Gastrocnemius medialis (tissue), 4 donors: ENCODE measurements at regions of chr11 and their contacts with region 1.

Region 1: DNA sequence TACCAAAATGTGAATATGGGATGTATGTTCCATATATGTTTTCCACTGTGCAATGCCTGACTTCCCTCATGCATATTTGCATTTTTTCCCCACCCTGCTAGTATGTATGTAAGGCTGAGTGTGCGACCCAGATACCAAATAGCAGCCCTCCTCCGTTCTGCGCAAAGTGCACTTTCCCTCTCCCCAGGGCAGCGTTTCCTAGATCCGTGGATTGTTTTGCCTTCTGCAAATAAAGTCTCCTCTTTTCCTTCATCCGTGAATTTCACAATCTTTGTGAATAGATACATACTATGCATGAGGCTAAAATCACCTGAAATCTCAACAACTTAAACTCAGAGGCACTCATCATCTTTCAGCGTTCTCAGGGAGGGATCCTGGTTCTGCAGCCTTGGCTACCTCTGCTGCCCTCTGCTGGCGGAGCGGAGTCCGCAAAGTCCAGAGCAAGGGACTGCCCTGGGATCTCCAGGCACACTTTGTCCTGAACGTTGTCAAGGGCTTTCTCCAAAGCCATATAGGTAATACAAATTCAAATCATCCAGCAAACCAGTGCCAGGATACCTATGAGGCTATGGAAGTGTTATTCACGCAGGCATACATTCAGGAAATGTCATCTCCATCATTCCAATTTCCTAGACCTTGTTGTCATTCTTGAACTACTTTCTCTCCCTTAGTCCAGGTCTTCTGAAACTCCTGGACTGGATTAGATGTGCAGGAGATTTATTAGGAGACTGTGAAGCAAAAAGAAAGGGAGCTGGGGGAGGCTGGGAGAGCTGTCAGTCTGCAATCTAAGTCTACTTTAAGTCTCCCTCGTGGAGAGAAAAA is 53.1 kb downstream of the CNTF start:
- DNase-seq: peak; percentile 23 to 57
- ATAC-seq: peak; percentile 75 to 91
- H3K4me3 ChIP-seq: no peak overlapping the region
- H3K27ac ChIP-seq: no peak overlapping the region
- H3K4me1 ChIP-seq: no peaks in the 10 kb centered on the region
- H3K27me3 ChIP-seq: no peaks in the 10 kb centered on the region
- CTCF ChIP-seq: peak; percentile 69 to 94 (median 78)
- POLR2A ChIP-seq: no peak

Region 2: GRCh38 chr11:58654079-58654907 is 21.3 kb before region 1 on chr11:
- in situ Hi-C with region 1: no loop called
- intact Hi-C with region 1: loop called (anchors 2 kb)
- DNase-seq: peak; percentile 12 to 56
- ATAC-seq: peak; percentile 61 to 63
- H3K4me3 ChIP-seq: no peak overlapping the region
- H3K27ac ChIP-seq: no peak overlapping the region
- H3K4me1 ChIP-seq: no peaks in the 10 kb centered on the region
- H3K27me3 ChIP-seq: no peaks in the 10 kb centered on the region
- CTCF ChIP-seq: peak; percentile 52 to 82 (median 65)
- POLR2A ChIP-seq: no peak